Right ventricle myocardium inferior (tissue), 1 donor: ENCODE measurements at regions of chr14 and their contacts with region 1.

Region 1: GRCh38 chr14:22929104-22929847 is at the start of gene PRMT5:
- DNase-seq: peak; percentile 98
- ATAC-seq: peak; percentile 98
- total RNA-seq, gene PRMT5: 48.7 TPM

Region 2: GRCh38 chr14:22986508-22987054 is 57.3 kb after region 1 on chr14:
- intact Hi-C with region 1: loop called (anchors 2 kb)
- DNase-seq: peak; percentile 85
- ATAC-seq: peak; percentile 30

Region 3: DNA sequence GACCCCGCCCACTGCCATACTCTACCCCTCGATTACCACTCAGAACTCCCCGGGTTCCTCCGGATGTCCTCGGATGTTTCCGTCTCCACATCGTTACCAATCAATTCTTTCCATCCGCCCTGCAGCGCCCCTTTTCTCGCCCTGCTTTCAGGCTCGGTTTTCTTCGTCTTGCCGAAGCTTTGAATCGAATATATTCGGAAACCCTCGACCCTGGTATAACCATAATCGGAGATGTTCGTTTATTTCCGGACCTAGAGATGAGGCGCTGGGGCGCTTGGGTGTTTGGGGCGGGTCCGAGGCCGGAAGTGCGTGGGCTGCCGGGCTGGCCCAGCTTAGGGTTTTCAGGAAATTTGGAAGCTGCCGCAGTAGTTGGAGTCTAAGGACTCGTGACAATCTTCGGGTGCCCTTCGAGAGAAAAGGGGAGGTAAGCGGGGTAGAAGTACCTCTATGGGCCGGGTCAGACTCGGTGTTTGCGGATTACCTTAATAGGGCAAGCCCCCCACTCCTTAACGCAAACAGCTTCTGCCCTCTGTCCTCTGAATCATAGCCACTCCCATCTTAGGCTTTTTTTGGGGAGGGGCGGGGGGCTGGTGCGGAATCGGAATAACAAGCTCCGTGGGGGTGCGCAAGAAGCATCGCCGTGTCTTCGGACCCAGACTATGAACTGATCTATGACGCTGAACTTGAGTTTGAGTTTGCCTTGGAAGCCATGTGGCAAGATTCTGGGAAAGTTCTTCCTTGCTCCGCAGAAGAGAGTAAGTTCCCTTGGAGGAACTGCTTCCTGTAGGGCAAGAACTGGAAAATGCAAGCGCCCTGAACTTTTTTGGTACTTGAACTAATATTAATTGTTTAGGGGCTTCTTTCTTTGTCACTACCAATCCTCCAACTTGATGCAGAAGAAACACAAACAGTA is 166.2 kb after region 1 on chr14 and contains the start of gene C14orf119:
- intact Hi-C with region 1: no loop called
- DNase-seq: no peak
- ATAC-seq: peak; percentile 96
- total RNA-seq, gene C14orf119: 22.4 TPM

Region 4: GRCh38 chr14:23763394-23763793 is 834.1 kb after region 1 on chr14:
- intact Hi-C with region 1: no loop called
- DNase-seq: no peak
- ATAC-seq: no peak